ENCODE measurements at regions of chr2 and their contacts with region 1.

Region 1: DNA sequence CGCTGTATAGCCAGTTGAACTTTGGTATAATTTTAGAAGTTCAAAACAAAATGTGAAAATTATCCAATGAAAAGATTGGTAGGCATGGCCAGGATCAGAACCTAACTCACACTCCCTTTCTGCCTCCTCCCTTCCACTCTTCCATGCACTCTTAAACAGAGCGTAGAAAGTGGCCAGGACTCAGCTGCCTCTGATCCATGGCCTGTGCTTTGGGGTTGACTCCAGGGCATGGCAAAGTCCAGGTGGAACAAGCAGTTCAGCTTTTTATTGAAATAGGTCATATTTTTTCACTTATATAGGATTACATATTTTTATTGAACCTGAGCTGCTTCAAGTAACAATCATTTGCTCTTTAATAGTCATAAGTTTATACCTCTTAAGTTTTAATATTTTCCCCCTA is 26.2 kb downstream of the INPP1 start:
- DNase-seq: no peak
- H3K4me3 ChIP-seq: no peak overlapping the region
- H3K4me3 Mint-ChIP-seq: no peak overlapping the region
- H3K27ac ChIP-seq: no peak overlapping the region
- H3K27ac Mint-ChIP-seq: no peak overlapping the region
- H3K4me1 ChIP-seq: no peaks in the 10 kb centered on the region
- H3K4me1 Mint-ChIP-seq: no peaks in the 10 kb centered on the region
- H3K27me3 ChIP-seq: no peaks in the 10 kb centered on the region
- H3K27me3 Mint-ChIP-seq: peaks cover 0 to 1% (median 0%) of the 10 kb centered on the region in 3 donors
- CTCF ChIP-seq: no peak

Region 2: GRCh38 chr2:190093793-190094192 is 275.8 kb before region 1 on chr2:
- intact Hi-C with region 1: loop called in 1 of 2 experiments (anchors 5 kb)
- DNase-seq: no peak
- H3K4me3 ChIP-seq: no peak overlapping the region
- H3K4me3 Mint-ChIP-seq: no peak overlapping the region
- H3K27ac ChIP-seq: no peak overlapping the region
- H3K27ac Mint-ChIP-seq: no peak overlapping the region
- H3K4me1 ChIP-seq: no peaks in the 10 kb centered on the region
- H3K4me1 Mint-ChIP-seq: no peaks in the 10 kb centered on the region
- H3K27me3 ChIP-seq: no peaks in the 10 kb centered on the region
- H3K27me3 Mint-ChIP-seq: no peaks in the 10 kb centered on the region
- CTCF ChIP-seq: no peak

Region 3: DNA sequence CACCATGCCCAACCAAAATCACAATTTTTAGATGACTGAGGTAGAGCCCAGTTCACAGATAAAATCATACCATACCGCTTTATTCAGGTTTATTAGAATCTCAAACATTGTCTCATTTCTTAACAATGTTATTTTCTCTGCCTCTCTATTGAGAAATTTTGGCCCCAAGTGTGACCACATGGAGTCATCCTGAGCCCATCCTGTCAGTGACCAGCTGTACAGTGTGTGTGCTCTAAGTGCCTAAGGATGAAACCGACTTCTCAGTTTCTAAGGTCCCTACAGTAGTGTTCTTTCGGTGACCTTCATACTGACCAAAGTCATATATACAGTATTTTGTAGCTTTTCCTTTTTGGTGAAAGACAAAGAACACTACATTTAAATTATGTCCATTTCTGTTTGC is 183.4 kb before region 1 on chr2:
- intact Hi-C with region 1: no loop called
- DNase-seq: no peak
- H3K4me3 ChIP-seq: no peak overlapping the region
- H3K4me3 Mint-ChIP-seq: no peak overlapping the region
- H3K27ac ChIP-seq: no peak overlapping the region
- H3K27ac Mint-ChIP-seq: no peak overlapping the region
- H3K4me1 ChIP-seq: peaks cover 0 to under 1% of the 10 kb centered on the region in 2 donors
- H3K4me1 Mint-ChIP-seq: peaks cover 2% of the 10 kb centered on the region
- H3K27me3 ChIP-seq: peaks cover 5% of the 10 kb centered on the region in 2 donors
- H3K27me3 Mint-ChIP-seq: peaks cover 3 to 9% (median 9%) of the 10 kb centered on the region in 3 donors
- CTCF ChIP-seq: no peak